Aorta (tissue), 5 donors: ENCODE measurements at regions of chr1 and their contacts with region 1.

Region 1: DNA sequence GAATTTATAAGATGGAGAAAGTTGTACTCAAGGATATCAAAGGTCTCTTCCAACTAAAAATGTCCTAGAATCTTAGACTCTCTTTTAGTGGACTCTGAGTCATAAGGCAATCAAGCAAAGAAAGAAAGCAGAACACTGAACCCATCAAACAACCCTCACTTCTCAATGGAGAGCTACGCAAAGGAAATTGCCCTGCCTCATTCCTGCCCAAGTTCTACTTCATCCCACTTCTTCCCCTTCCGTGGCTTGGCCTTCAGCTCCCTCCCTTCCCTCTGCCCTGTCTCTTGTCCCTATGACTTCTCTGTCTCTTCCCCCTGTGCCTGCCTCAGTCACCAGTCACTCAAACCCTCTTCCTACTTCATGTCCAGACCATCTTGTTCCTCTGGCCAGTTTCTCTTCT is 58.5 kb downstream of the RIMS3 start:
- DNase-seq: no peak
- ATAC-seq: no peak
- H3K4me3 ChIP-seq: no peak overlapping the region
- H3K27ac ChIP-seq: no peak overlapping the region
- H3K4me1 ChIP-seq: no peaks in the 10 kb centered on the region
- H3K27me3 ChIP-seq: no peaks in the 10 kb centered on the region

Region 2: DNA sequence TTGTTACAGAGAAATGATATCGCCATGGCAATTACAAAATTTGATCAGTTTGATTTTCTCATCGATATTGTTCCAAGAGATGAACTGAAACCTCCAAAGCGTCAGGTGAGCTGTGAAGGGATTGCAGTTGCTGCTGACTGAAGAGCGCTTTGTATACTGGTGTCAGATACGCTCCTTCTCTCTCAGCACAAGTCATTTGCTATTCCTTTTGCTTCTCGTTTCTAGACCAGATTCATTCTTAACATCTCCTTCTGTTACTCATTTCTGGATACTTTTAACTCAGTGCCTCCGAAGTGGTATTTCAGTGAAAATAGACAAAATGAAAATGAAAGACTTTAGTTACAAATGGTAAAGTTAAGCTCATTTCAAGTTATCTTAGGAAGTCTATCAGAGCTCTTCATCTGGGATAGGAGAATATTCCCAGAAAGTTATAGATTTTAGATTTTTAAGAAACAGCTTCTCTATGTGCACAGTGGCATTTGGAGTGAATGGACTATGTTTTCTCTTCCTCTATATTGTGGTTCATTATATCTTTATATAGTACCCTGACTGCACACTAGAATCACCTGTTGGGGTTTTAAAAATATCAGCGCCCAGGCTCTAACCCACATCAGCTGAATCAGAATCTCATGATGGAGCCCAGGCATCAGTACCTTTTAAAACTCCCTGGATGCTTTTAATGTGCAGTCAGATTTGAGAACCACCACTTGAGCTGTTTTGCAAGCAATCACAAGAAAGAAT is 146.3 kb after region 1 on chr1:
- intact Hi-C with region 1: no loop called
- DNase-seq: no peak
- ATAC-seq: no peak
- H3K4me3 ChIP-seq: no peak overlapping the region
- H3K27ac ChIP-seq: no peak overlapping the region
- H3K4me1 ChIP-seq: no peaks in the 10 kb centered on the region
- H3K27me3 ChIP-seq: no peaks in the 10 kb centered on the region

Region 3: GRCh38 chr1:40763742-40764532 is 157.0 kb after region 1 on chr1:
- intact Hi-C with region 1: no loop called
- DNase-seq: no peak
- ATAC-seq: no peak
- H3K4me3 ChIP-seq: no peak overlapping the region
- H3K27ac ChIP-seq: no peak overlapping the region
- H3K4me1 ChIP-seq: no peaks in the 10 kb centered on the region
- H3K27me3 ChIP-seq: no peaks in the 10 kb centered on the region

Region 4: GRCh38 chr1:40951943-40952743 is 345.2 kb after region 1 on chr1:
- intact Hi-C with region 1: loop called (anchors 2 to 5 kb)
- DNase-seq: peak; percentile 74 to 90
- ATAC-seq: peak; percentile 87
- H3K4me3 ChIP-seq: no peak overlapping the region
- H3K27ac ChIP-seq: no peak overlapping the region
- H3K4me1 ChIP-seq: no peaks in the 10 kb centered on the region
- H3K27me3 ChIP-seq: no peaks in the 10 kb centered on the region